Aorta (tissue), 5 donors: ENCODE measurements at regions of chr22 and their contacts with region 1.

Region 1: DNA sequence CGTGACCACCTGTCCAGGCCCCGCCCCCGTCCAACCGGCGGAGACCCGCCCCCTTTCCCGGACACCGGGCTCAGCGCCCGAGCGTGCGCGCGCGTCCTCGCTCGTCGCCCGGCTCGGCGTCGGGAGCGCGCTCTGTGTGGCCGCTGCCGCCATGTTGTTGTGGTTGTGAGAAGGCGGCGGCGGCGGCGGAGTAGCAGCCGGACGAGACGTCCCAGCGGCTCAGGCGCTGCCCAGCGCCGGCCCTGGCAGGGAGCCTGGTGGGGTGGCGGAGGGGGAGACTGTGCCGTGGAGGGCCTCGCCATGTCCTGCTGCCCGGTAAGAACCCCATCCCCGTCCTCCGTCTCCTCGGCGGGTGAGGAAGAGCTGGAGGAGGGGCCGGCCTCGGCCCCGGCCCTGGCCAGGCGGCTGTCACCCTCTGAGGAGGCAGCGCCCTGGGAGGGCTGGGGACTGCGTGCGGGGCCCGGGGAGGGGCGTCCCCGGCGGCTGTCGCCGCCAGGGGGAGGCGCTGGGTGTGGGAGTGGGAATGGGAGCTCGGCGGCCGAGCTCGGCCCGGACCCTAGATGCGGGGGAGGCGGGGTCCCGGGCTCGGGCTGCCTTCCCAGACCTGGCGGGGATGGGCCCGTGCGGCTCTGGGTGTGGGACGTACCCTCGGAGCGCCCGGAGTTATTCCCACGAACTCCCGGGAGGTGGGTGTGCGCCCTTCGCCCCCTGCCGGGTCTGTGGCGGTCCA is at the start of gene MTMR3:
- DNase-seq: peak; percentile 96 to 98
- ATAC-seq: peak; percentile 92
- H3K4me3 ChIP-seq: peak within 1 kb of the TSS; percentile 93 to 94
- H3K27ac ChIP-seq: peak within 1 kb of the TSS; percentile 24 to 93
- H3K4me1 ChIP-seq: no peaks in the 10 kb centered on the region
- H3K27me3 ChIP-seq: no peaks in the 10 kb centered on the region
- total RNA-seq, gene MTMR3: 52.7 to 65.3 TPM

Region 2: DNA sequence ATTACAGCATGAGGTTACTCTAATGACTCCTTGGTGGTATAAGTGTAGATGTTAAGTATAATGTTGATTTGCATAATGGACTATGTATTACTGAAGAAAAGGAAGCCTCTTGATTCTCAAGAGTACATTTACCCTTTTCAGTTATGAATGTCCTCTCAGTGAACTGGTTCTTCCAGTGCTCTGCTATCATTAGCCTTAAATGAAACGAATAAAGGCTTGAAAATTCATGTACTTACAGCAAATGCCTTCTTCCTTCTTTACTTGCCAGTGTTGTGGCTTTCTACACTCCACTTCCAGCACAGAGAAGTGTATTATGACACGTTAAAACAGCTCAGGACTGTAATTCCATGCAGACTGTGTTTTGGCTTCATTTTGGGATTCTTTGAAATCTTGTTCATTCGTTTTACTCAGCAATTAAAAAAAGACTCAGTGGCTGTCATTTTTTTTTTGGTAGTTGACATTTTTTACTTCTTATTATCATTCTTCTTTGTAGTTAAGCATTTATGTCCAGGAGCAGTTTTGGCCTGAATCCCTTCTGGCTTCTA is 96.6 kb after region 1 on chr22:
- intact Hi-C with region 1: loop called in 1 of 2 experiments (anchors 10 kb)
- DNase-seq: no peak
- ATAC-seq: no peak
- H3K4me3 ChIP-seq: no peak overlapping the region
- H3K27ac ChIP-seq: no peak overlapping the region
- H3K4me1 ChIP-seq: no peaks in the 10 kb centered on the region
- H3K27me3 ChIP-seq: no peaks in the 10 kb centered on the region

Region 3: DNA sequence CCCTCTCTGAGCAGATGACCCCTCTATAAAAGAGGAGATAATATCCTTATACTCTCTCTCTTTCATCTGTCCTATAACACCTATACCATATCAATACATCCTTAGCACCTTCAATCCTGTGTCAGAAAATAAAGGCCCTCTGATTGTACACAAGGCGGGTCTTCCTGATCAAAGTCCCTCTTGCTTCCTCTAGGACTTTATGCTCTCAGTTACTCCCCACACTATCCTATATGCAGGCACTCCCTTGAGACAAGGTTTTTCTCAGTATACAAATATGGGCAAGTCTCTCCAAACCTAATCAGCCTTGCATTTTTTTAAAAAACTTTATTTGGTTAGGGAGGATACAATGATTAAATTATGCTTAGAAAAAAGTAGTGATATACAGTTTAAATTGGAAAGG is 179.7 kb after region 1 on chr22:
- intact Hi-C with region 1: no loop called
- DNase-seq: no peak
- ATAC-seq: no peak
- H3K4me3 ChIP-seq: no peak overlapping the region
- H3K27ac ChIP-seq: no peak overlapping the region
- H3K4me1 ChIP-seq: no peaks in the 10 kb centered on the region
- H3K27me3 ChIP-seq: no peaks in the 10 kb centered on the region